Activated CD4-positive, alpha-beta T cell treated with anti-CD3 and anti-CD28 coated beads, Interleukin-2, amount 10 ng/mL, durations not matched to agents 24 days and 14 days (primary cell): ENCODE measurements at regions of chr7 and their contacts with region 1.

Region 1: DNA sequence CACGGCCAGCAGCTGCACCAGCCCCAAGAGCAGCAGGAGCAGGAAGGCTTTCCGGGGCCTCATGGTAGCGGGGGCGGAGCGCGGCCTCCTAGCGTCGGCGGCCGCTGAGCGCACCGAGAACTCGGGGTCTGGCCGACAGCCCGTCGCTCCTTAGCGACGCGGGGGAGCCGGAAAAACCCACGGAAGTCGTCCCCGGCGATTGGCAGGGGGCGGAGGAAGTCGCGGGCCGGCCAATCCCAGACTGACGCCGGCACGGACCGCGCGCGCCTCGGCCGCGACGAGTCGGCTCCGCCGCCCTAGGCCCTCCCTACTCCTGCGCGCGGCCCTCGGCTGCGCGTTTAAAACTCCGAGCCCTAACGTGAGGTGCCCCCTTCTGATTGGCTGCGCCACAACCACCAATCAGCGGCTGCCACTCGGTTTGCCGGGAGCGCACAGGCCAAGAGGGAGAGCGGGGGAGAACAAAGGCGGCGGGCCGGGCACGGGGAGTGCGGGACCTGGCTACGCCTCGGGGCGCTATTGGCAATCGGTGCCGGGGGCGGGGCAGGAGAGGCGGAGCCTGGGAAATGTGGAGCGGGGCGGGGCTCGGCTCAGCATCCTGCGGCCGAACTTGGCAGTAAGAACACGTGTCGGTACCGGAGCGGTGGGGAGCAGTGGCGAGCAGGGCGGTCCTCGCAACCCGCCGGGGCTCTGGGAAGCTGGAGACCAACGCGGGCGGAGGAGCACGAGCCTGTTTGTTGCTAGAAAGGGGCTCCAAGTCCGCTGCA is at the start of gene PDIA4:
- DNase-seq: peak; percentile 100
- H3K4me3 Mint-ChIP-seq: peak within 1 kb of the TSS; percentile 99
- H3K27ac Mint-ChIP-seq: peak within 1 kb of the TSS; percentile 95
- H3K4me1 Mint-ChIP-seq: peaks cover 33% of the 10 kb centered on the region
- H3K27me3 Mint-ChIP-seq: peaks cover 6% of the 10 kb centered on the region
- total RNA-seq, gene PDIA4: 137 and 138 TPM in 2 replicates

Region 2: GRCh38 chr7:148987010-148987750 is 41.3 kb before region 1 on chr7:
- intact Hi-C with region 1: loop called (anchors 1 kb)
- DNase-seq: peak; percentile 94
- H3K4me3 Mint-ChIP-seq: peak overlapping the region; percentile 95
- H3K27ac Mint-ChIP-seq: peak overlapping the region; percentile 94
- H3K4me1 Mint-ChIP-seq: peaks cover 41% of the 10 kb centered on the region
- H3K27me3 Mint-ChIP-seq: peaks cover 23% of the 10 kb centered on the region

Region 3: DNA sequence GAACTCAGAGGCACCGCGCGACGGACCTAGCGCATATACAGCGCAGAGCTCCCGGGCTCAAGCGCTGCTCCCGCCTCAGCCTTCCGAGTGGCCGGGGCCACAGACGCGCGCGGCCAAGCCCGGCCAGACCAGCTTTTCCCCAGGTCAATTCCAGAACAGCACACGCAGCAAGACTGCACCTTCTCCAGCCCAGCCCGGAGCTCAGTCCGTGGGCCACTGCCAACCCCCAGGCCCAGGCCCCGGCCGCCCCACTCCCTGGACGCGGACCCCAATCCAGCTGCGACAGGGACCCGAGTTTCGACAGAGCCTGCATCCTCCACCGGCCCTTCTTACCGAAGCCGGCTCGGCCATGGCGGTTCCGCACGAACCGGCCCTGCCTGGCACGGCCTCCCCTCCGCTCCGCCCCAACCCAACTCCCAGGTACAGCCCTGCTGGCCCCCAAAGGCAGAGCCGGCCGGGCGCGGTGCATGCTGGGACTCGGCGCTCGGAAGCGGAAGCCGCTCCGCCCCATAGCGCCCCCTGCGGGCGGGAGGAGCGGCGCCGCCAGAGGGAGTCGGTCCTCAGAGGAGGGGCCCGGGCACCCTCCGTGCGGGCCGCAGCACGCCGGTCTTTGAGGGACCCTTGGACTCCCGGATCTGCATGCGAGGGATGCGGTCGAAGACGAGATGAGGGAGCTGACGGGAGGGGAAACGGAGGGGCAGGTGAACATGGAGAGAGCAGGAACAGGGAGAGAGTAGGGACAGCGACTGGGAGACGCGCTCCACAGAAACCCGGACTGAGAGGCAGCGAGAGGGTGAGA is 97.5 kb after region 1 on chr7 and contains the start of gene ZNF425:
- intact Hi-C with region 1: loop called (anchors 1 kb)
- DNase-seq: peak; percentile 99
- H3K4me3 Mint-ChIP-seq: peak within 1 kb of the TSS; percentile 90
- H3K27ac Mint-ChIP-seq: peak within 1 kb of the TSS; percentile 98
- H3K4me1 Mint-ChIP-seq: peaks cover 18% of the 10 kb centered on the region
- H3K27me3 Mint-ChIP-seq: no peaks in the 10 kb centered on the region
- total RNA-seq, gene ZNF425: 0.44 and 0.92 TPM in 2 replicates

Region 4: GRCh38 chr7:149261829-149262617 is 233.5 kb after region 1 on chr7 and contains the start of gene ZNF783:
- intact Hi-C with region 1: loop called (anchors 5 kb)
- DNase-seq: peak; percentile 96
- H3K4me3 Mint-ChIP-seq: peak within 1 kb of the TSS; percentile 85
- H3K27ac Mint-ChIP-seq: peak within 1 kb of the TSS; percentile 97
- H3K4me1 Mint-ChIP-seq: peaks cover 22% of the 10 kb centered on the region
- H3K27me3 Mint-ChIP-seq: no peaks in the 10 kb centered on the region
- total RNA-seq, gene ZNF783: 27.2 and 27.4 TPM in 2 replicates

Region 5: GRCh38 chr7:149317986-149318672 is 289.6 kb after region 1 on chr7:
- intact Hi-C with region 1: no loop called
- DNase-seq: no peak
- H3K4me3 Mint-ChIP-seq: no peak overlapping the region
- H3K27ac Mint-ChIP-seq: no peak overlapping the region
- H3K4me1 Mint-ChIP-seq: peaks cover 17% of the 10 kb centered on the region
- H3K27me3 Mint-ChIP-seq: peaks cover 15% of the 10 kb centered on the region